CD8-positive, alpha-beta T cell (primary cell): ENCODE measurements at regions of chr17 and their contacts with region 1.

Region 1: GRCh38 chr17:42438600-42439567 is 15.8 kb upstream of the CAVIN1 start:
- DNase-seq: peak in 6 of 9 experiments; percentile 46 to 68 (median 55)
- ATAC-seq: no peak
- H3K4me3 ChIP-seq: no peak overlapping the region
- H3K4me3 Mint-ChIP-seq: no peak overlapping the region
- H3K27ac ChIP-seq: no peak overlapping the region
- H3K27ac Mint-ChIP-seq: no peak overlapping the region
- H3K4me1 ChIP-seq: peaks cover 8% of the 10 kb centered on the region
- H3K4me1 Mint-ChIP-seq: peaks cover 8% of the 10 kb centered on the region
- H3K27me3 ChIP-seq: no peaks in the 10 kb centered on the region
- H3K27me3 Mint-ChIP-seq: peaks cover 6% of the 10 kb centered on the region
- CTCF ChIP-seq: peak; percentile 52

Region 2: GRCh38 chr17:42422958-42423712 is 15.7 kb before region 1 on chr17 and contains the start of gene CAVIN1:
- CTCF ChIA-PET with region 1: interaction called, 16 read pairs
- POLR2A ChIA-PET with region 1: interaction called, 3 read pairs
- intact Hi-C with region 1: no loop called
- DNase-seq: no peak
- ATAC-seq: peak; percentile 12
- H3K4me3 ChIP-seq: peak within 1 kb of the TSS; percentile 26 to 35
- H3K4me3 Mint-ChIP-seq: peak within 1 kb of the TSS; percentile 86
- H3K27ac ChIP-seq: no peak within 1 kb of the TSS
- H3K27ac Mint-ChIP-seq: no peak within 1 kb of the TSS
- H3K4me1 ChIP-seq: peaks cover 11% of the 10 kb centered on the region
- H3K4me1 Mint-ChIP-seq: peaks cover 15% of the 10 kb centered on the region
- H3K27me3 ChIP-seq: peaks cover 11 to 17% of the 10 kb centered on the region in 2 experiments
- H3K27me3 Mint-ChIP-seq: peaks cover 34% of the 10 kb centered on the region
- CTCF ChIP-seq: no peak
- total RNA-seq, gene CAVIN1: not detected

Region 3: GRCh38 chr17:42484304-42484703 is 45.4 kb after region 1 on chr17:
- CTCF ChIA-PET with region 1: interaction called, 4 read pairs
- POLR2A ChIA-PET with region 1: interaction called, 4 read pairs
- intact Hi-C with region 1: loop called (anchors 5 to 10 kb)
- DNase-seq: peak; percentile 37 to 96 (median 70)
- ATAC-seq: peak; percentile 91
- H3K4me3 ChIP-seq: peak overlapping the region in 1 of 2 experiments; percentile 6
- H3K4me3 Mint-ChIP-seq: peak overlapping the region; percentile 51
- H3K27ac ChIP-seq: no peak overlapping the region
- H3K27ac Mint-ChIP-seq: peak overlapping the region; percentile 45
- H3K4me1 ChIP-seq: peaks cover 30% of the 10 kb centered on the region
- H3K4me1 Mint-ChIP-seq: peaks cover 38% of the 10 kb centered on the region
- H3K27me3 ChIP-seq: no peaks in the 10 kb centered on the region
- H3K27me3 Mint-ChIP-seq: no peaks in the 10 kb centered on the region
- CTCF ChIP-seq: no peak

Region 4: DNA sequence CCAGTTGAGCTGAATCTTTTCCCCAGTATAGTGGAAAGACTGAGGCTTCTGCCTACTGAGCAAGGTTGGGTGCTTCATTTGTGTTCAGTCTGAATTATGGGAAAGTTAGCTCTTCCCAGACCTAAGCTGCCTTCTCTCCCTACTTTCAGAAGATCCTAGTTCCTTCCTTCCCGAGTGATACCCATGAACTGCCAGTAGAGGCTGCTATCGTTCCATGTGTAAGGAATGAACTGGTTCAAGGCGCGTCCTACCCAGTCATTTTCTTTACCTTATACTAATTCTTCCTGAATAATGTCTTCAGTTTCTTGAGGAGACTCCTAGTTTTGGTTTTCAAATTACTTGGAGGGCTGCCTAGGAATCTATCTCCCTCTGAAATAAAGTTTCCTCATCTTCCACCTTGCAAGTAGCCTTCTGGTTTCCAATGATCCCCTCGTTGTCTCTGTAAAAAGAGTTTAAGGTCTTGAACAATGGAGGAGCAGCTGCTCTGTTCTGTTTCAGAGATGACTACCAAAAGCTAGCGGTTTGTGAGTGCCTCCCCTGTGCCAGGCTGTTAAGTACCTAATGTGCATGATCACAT is 404.6 kb after region 1 on chr17:
- CTCF ChIA-PET with region 1: no interaction called
- POLR2A ChIA-PET with region 1: no interaction called
- intact Hi-C with region 1: no loop called
- DNase-seq: peak in 2 of 9 experiments; percentile 31 to 47
- ATAC-seq: no peak
- H3K4me3 ChIP-seq: no peak overlapping the region
- H3K4me3 Mint-ChIP-seq: no peak overlapping the region
- H3K27ac ChIP-seq: no peak overlapping the region
- H3K27ac Mint-ChIP-seq: no peak overlapping the region
- H3K4me1 ChIP-seq: no peaks in the 10 kb centered on the region
- H3K4me1 Mint-ChIP-seq: no peaks in the 10 kb centered on the region
- H3K27me3 ChIP-seq: no peaks in the 10 kb centered on the region
- H3K27me3 Mint-ChIP-seq: no peaks in the 10 kb centered on the region
- CTCF ChIP-seq: peak; percentile 35